ENCODE measurements at regions of chr4 and their contacts with region 1.

Region 1: GRCh38 chr4:53196882-53197771 is 168.7 kb downstream of the SCFD2 start:
- DNase-seq: no peak
- H3K4me3 Mint-ChIP-seq: no peak overlapping the region
- H3K27ac Mint-ChIP-seq: no peak overlapping the region
- H3K4me1 Mint-ChIP-seq: no peaks in the 10 kb centered on the region
- H3K27me3 Mint-ChIP-seq: no peaks in the 10 kb centered on the region

Region 2: GRCh38 chr4:53015681-53016080 is 181.4 kb before region 1 on chr4:
- intact Hi-C with region 1: loop called (anchors 5 kb)
- DNase-seq: no peak
- H3K4me3 Mint-ChIP-seq: no peak overlapping the region
- H3K27ac Mint-ChIP-seq: no peak overlapping the region
- H3K4me1 Mint-ChIP-seq: peaks cover 28% of the 10 kb centered on the region
- H3K27me3 Mint-ChIP-seq: no peaks in the 10 kb centered on the region

Region 3: DNA sequence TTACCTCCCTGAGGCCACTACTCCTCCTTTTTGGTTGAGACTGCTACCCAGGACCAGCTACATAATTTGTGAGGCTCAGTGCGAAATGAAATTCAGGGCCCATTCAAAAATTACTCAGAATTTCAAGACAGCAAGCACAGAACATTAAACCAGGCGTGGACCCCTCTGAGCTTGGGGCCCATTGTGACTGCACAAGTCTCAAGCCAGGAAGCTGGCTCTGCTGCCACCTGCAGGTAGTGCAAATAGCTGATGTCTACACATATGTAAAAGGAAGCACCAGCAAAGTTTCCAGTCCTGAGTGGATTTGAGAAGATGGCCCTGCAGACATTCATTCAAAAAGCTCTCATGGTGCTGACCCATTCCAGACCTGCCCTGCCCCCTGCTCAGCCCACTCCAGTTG is 607.6 kb after region 1 on chr4:
- intact Hi-C with region 1: loop called (anchors 2 kb)
- DNase-seq: no peak
- H3K4me3 Mint-ChIP-seq: no peak overlapping the region
- H3K27ac Mint-ChIP-seq: no peak overlapping the region
- H3K4me1 Mint-ChIP-seq: no peaks in the 10 kb centered on the region
- H3K27me3 Mint-ChIP-seq: no peaks in the 10 kb centered on the region

Region 4: DNA sequence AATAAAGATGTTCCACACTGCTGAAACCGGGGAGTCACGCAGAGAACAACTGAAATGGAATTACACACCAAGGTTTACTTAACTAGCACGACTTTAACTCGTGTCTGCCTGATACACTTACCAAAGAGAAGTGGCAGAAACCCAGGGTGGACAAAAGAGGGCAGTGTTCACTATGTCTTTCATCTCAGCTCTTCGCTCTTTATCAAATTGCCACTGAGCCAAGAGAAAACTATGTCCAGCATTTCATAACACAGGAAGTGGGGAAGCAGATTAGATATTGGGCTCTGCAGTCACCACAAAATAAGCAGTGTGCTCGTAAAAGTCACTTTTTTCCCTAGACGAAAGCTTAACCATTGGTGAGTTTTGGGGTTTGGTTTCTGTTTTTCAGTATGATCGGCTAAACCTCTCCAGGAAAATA is 711.5 kb after region 1 on chr4:
- intact Hi-C with region 1: loop called (anchors 5 kb)
- DNase-seq: no peak
- H3K4me3 Mint-ChIP-seq: no peak overlapping the region
- H3K27ac Mint-ChIP-seq: no peak overlapping the region
- H3K4me1 Mint-ChIP-seq: peaks cover 11% of the 10 kb centered on the region
- H3K27me3 Mint-ChIP-seq: peaks cover 46% of the 10 kb centered on the region

Region 5: DNA sequence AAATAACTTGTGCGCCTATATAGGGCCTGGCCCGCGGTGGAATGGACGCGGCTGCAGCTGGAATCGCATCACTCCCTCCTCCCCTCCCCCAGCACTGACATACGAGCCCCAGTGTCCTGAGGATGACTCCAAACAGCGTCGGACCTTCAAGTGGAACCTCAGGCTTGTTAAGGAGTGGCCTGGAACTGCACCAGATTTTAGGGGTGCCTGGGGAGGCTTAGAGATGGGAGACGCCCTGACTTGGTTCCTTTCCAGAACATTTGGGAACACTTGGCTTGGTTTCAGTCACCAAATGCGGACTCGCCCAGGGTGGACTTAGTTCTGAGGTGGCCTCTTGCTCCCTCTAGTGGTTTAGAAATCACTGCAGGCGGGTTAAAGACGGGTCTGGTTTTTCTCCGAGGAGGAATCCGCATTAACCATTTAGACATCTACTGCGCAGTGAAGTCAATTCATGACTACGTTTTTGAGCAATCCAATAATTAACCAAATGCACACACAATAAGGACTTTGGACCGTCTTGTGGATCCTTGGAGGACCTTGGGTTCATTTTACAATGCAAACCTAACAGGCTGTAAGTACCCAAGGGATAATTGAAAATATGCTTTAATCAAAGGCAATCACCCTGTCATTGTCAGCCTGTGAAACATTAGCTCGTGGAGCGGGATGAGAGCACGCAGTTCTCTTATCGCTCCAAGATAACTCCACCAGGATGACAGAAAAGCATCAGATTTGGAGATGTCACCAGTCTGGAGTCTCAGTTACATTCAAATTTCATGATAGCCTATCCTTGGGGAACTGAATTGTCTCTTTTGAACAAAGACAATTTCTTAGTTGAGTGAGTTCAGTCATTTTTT is 1020.7 kb after region 1 on chr4:
- intact Hi-C with region 1: loop called (anchors 1 kb)
- DNase-seq: peak; percentile 37
- H3K4me3 Mint-ChIP-seq: no peak overlapping the region
- H3K27ac Mint-ChIP-seq: no peak overlapping the region
- H3K4me1 Mint-ChIP-seq: peaks cover 1% of the 10 kb centered on the region
- H3K27me3 Mint-ChIP-seq: peaks cover 32% of the 10 kb centered on the region

Region 6: DNA sequence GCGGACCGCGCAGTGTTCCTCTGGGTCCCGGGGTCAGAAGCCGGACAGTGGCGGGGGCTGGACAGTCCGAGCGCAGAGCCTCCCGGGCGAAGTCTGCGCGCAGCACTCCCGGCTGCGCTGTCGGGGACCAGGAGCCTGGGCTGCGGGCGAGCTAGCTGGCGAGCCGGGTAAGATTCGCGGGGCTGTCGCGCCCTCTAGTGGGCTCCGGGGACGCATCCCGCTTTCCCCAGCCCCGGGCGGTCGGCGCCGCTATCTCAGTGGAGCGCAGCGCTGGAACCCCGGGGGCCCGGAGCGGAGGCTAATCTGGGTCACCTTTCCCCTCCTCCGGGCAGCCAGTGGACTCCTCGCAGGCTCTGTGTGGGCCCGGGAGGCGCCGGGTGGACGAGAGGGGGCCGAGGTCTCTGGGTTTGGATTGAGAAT is 1036.2 kb after region 1 on chr4:
- intact Hi-C with region 1: loop called (anchors 1 kb)
- DNase-seq: peak; percentile 64
- H3K4me3 Mint-ChIP-seq: peak overlapping the region; percentile 41
- H3K27ac Mint-ChIP-seq: no peak overlapping the region
- H3K4me1 Mint-ChIP-seq: peaks cover 19% of the 10 kb centered on the region
- H3K27me3 Mint-ChIP-seq: peaks cover 55% of the 10 kb centered on the region